Activated B cell treated with CpG ODN at 0.5 μM for 24 hours (primary cell): ENCODE measurements at regions of chr2 and their contacts with region 1.

Region 1: DNA sequence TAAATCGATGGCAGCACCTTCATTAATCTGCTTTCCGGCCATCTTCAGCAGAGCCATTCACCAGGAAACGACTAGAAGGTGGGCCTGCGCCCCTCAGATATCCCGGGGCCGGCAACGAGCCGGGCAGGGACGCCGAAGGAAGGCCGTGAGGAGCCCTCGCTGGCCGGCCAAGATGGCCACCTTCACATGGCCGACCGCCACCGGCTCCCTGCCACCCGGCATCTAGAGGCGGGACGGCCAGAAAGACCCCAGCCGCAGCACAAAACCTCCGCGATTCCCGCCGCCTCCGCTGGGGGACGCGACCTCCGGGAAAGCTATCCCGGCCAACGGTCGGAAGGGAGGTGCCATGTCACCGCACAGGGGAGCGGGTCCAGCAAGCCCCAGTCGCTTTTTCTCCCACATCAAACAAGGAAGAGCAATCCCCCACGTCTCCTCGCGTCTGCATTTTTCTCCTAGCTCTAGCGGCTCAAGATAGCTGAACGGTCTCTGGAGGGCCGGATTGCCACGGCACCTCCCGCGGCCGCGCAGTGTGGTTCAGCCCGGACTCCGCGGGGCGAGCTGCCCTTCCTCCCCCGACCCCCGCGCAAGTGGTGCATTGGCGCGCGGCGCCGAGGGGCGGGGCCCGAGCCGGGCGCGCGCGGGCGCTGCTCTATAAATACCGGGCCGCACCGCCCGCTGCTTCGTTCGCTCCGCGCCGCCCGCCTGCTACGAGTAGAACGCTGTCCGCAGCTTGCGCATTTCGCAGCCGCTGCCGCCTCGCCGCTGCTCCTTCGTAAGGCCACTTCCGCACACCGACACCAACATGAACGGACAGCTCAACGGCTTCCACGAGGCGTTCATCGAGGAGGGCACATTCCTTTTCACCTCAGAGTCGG is at the start of gene MAT2A:
- DNase-seq: peak; percentile 94
- ATAC-seq: peak; percentile 80
- H3K4me3 Mint-ChIP-seq: peak within 1 kb of the TSS; percentile 96
- H3K27ac Mint-ChIP-seq: peak within 1 kb of the TSS; percentile 99
- H3K4me1 Mint-ChIP-seq: peaks cover 37% of the 10 kb centered on the region
- H3K27me3 Mint-ChIP-seq: no peaks in the 10 kb centered on the region
- CTCF ChIP-seq: no peak
- total RNA-seq, gene MAT2A: 228 and 265 TPM in 2 replicates

Region 2: GRCh38 chr2:84905181-84906107 is 633.3 kb before region 1 on chr2 and contains the start of gene TMSB10:
- CTCF ChIA-PET with region 1: no interaction called
- POLR2A ChIA-PET with region 1: no interaction called
- intact Hi-C with region 1: loop called (anchors 5 kb)
- DNase-seq: peak; percentile 94
- ATAC-seq: peak; percentile 84
- H3K4me3 Mint-ChIP-seq: peak within 1 kb of the TSS; percentile 93
- H3K27ac Mint-ChIP-seq: peak within 1 kb of the TSS; percentile 87
- H3K4me1 Mint-ChIP-seq: peaks cover 55% of the 10 kb centered on the region
- H3K27me3 Mint-ChIP-seq: no peaks in the 10 kb centered on the region
- CTCF ChIP-seq: no peak
- total RNA-seq, gene TMSB10: 925 and 1,069 TPM in 2 replicates

Region 3: GRCh38 chr2:85409845-85410583 is 128.7 kb before region 1 on chr2 and contains the start of gene CAPG:
- CTCF ChIA-PET with region 1: no interaction called
- POLR2A ChIA-PET with region 1: interaction called, 36 read pairs
- intact Hi-C with region 1: no loop called
- DNase-seq: peak; percentile 76
- ATAC-seq: peak; percentile 75
- H3K4me3 Mint-ChIP-seq: peak within 1 kb of the TSS; percentile 89
- H3K27ac Mint-ChIP-seq: peak within 1 kb of the TSS; percentile 92
- H3K4me1 Mint-ChIP-seq: peaks cover 90% of the 10 kb centered on the region
- H3K27me3 Mint-ChIP-seq: no peaks in the 10 kb centered on the region
- CTCF ChIP-seq: no peak
- total RNA-seq, gene CAPG: 208 and 213 TPM in 2 replicates

Region 4: GRCh38 chr2:85561317-85561979 is 22.7 kb after region 1 on chr2 and contains the start of gene GGCX:
- CTCF ChIA-PET with region 1: no interaction called
- POLR2A ChIA-PET with region 1: interaction called, 84 read pairs
- intact Hi-C with region 1: loop called (anchors 1 kb)
- DNase-seq: peak; percentile 84
- ATAC-seq: peak; percentile 88
- H3K4me3 Mint-ChIP-seq: peak within 1 kb of the TSS; percentile 98
- H3K27ac Mint-ChIP-seq: peak within 1 kb of the TSS; percentile 98
- H3K4me1 Mint-ChIP-seq: peaks cover 38% of the 10 kb centered on the region
- H3K27me3 Mint-ChIP-seq: no peaks in the 10 kb centered on the region
- CTCF ChIP-seq: no peak
- total RNA-seq, gene GGCX: 30.0 and 30.7 TPM in 2 replicates

Region 5: GRCh38 chr2:85595301-85596025 is 56.7 kb after region 1 on chr2 and contains the start of gene RNF181:
- CTCF ChIA-PET with region 1: no interaction called
- POLR2A ChIA-PET with region 1: interaction called, 33 read pairs
- intact Hi-C with region 1: no loop called
- DNase-seq: peak; percentile 71
- ATAC-seq: peak; percentile 99
- H3K4me3 Mint-ChIP-seq: peak within 1 kb of the TSS; percentile 99
- H3K27ac Mint-ChIP-seq: peak within 1 kb of the TSS; percentile 97
- H3K4me1 Mint-ChIP-seq: peaks cover 36% of the 10 kb centered on the region
- H3K27me3 Mint-ChIP-seq: no peaks in the 10 kb centered on the region
- CTCF ChIP-seq: no peak
- total RNA-seq, gene RNF181: 104 and 108 TPM in 2 replicates

Region 6: GRCh38 chr2:85785027-85785822 is 246.5 kb after region 1 on chr2:
- CTCF ChIA-PET with region 1: no interaction called
- POLR2A ChIA-PET with region 1: no interaction called
- intact Hi-C with region 1: no loop called
- DNase-seq: no peak
- ATAC-seq: no peak
- H3K4me3 Mint-ChIP-seq: no peak overlapping the region
- H3K27ac Mint-ChIP-seq: no peak overlapping the region
- H3K4me1 Mint-ChIP-seq: peaks cover 1% of the 10 kb centered on the region
- H3K27me3 Mint-ChIP-seq: peaks cover 6% of the 10 kb centered on the region
- CTCF ChIP-seq: no peak

Region 7: DNA sequence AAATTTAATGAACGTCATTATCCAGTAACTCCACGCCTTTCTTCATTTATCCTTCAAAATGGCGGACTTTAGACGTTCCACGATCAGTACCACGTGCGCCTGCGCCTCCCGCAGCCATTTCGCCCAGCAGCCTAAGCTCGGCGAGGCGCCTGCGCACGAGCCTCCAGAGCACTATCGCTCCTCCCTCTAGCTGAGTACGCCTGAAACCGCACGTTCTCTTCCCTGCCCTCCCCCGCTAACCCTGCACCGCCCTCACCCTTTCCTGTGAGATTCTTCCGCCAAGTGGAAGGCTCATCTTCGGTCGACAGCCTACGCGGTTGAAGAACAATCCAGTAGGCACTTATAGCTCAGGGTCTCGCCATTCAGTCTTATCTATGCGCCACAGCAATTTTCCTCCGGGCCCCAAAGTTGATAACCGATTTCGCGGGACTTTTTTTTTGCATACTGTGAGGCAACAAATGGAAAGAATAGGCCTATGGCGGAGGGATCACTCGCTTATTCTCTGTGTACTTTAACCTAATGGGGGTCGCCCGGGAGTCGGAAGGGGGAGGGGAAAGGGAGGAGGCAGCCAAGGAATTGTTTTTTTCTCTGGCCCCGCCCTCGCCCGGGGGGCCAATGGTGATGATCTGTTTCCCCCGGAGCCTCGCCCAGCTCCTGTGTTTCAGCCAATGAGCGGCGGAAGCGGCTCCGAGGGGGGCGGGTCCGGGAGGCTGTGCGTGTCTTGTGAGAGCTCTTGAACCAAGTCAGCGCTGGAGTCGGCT is 902.1 kb after region 1 on chr2 and contains the start of gene KDM3A:
- CTCF ChIA-PET with region 1: no interaction called
- POLR2A ChIA-PET with region 1: interaction called, 4 read pairs
- intact Hi-C with region 1: loop called (anchors 2 kb)
- DNase-seq: peak; percentile 97
- ATAC-seq: peak; percentile 81
- H3K4me3 Mint-ChIP-seq: peak within 1 kb of the TSS; percentile 96
- H3K27ac Mint-ChIP-seq: peak within 1 kb of the TSS; percentile 100
- H3K4me1 Mint-ChIP-seq: peaks cover 45% of the 10 kb centered on the region
- H3K27me3 Mint-ChIP-seq: no peaks in the 10 kb centered on the region
- CTCF ChIP-seq: no peak
- total RNA-seq, gene KDM3A: 46.0 and 47.6 TPM in 2 replicates